ENCODE measurements at regions of chr5 and their contacts with region 1.

Region 1: DNA sequence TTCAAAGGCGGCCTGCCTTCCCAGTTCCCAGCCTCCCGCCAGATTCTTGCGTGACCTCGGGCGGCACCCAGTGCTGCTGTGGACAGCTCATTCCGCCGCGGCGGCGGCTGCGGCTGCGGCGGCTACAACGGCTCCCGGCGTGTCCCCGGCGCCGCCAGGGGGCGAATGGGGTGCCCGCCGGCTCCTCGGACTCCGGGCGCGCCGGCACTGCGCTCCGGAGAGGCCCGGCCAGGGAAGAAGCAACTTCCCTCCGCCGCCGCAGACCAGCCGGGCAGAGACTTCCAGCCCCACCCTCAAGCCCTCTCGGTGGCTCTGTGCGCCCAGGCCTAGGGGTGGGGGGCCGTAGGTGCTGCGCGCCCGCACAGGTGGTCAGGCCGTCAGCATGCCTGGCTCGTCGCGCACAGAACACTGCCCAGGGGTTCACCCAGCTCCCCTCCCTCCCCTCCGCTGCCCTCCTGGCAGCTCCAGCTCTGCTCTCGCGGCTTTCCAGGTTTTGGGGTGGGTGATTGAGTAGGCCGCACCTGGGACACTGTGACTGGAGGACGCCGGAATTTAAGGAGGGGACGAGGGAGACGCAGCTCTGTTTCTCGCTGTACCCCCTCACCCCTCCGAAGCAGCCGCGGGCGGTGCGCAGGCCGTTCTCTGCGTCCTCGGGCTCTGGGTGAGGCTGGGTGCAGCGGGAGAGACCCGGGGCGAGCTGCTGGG is 20.2 kb downstream of the IGIP start:
- DNase-seq: peak in 8 of 9 experiments; percentile 22 to 72 (median 52)
- ATAC-seq: peak; percentile 69
- H3K4me3 ChIP-seq: peak overlapping the region; percentile 32 to 36
- H3K4me3 Mint-ChIP-seq: peak overlapping the region; percentile 66
- H3K27ac ChIP-seq: no peak overlapping the region
- H3K27ac Mint-ChIP-seq: no peak overlapping the region
- H3K4me1 ChIP-seq: peaks cover 22% of the 10 kb centered on the region
- H3K4me1 Mint-ChIP-seq: peaks cover 18% of the 10 kb centered on the region
- H3K27me3 ChIP-seq: peaks cover 7 to 8% of the 10 kb centered on the region in 2 experiments
- H3K27me3 Mint-ChIP-seq: peaks cover 18% of the 10 kb centered on the region
- CTCF ChIP-seq: peak; percentile 64

Region 2: DNA sequence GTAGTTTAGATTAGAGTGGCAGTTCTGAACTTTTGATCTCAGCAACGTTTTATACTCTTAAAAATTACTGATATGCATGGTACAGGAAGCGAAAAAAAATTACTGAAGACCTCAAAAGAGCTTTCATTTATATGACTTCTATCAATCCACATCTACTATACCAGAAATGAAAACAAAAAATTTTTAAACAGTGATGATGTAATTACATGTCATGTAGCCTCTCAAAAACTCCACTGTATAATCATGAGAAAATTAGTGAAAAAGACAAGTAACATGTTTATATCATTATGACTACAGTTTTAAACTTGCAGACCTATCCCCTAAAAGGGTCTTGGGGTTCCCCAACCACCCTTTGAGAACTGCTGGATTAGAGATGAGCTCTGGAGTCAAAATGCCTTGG is 716.0 kb before region 1 on chr5:
- CTCF ChIA-PET with region 1: no interaction called
- POLR2A ChIA-PET with region 1: no interaction called
- intact Hi-C with region 1: no loop called
- DNase-seq: peak in 1 of 9 experiments; percentile 31
- ATAC-seq: peak; percentile 92
- H3K4me3 ChIP-seq: no peak overlapping the region
- H3K4me3 Mint-ChIP-seq: no peak overlapping the region
- H3K27ac ChIP-seq: no peak overlapping the region
- H3K27ac Mint-ChIP-seq: peak overlapping the region; percentile 78
- H3K4me1 ChIP-seq: peaks cover 13% of the 10 kb centered on the region
- H3K4me1 Mint-ChIP-seq: peaks cover 11% of the 10 kb centered on the region
- H3K27me3 ChIP-seq: no peaks in the 10 kb centered on the region
- H3K27me3 Mint-ChIP-seq: no peaks in the 10 kb centered on the region
- CTCF ChIP-seq: no peak

Region 3: DNA sequence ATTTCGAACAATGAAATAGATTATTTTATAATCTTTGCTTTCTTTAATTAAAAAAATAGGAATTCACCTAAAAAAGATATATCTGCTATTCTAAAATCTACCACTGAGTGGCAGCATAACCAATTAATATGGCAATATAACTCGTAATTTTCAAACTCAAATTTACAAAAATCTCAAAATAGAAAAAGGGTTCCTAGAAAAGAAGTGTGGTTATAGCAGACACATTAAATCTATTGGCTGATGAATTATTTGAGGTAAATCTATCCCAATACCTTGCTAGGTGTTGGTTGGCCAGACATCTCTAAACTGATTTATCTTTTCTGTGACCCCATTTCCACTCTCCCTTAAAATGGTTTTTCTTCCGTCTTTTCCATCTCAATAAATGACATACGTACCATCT is 72.7 kb before region 1 on chr5:
- CTCF ChIA-PET with region 1: interaction called, 179 read pairs
- POLR2A ChIA-PET with region 1: no interaction called
- intact Hi-C with region 1: loop called (anchors 1 kb)
- DNase-seq: peak in 2 of 9 experiments; percentile 56 to 62
- ATAC-seq: no peak
- H3K4me3 ChIP-seq: no peak overlapping the region
- H3K4me3 Mint-ChIP-seq: no peak overlapping the region
- H3K27ac ChIP-seq: no peak overlapping the region
- H3K27ac Mint-ChIP-seq: no peak overlapping the region
- H3K4me1 ChIP-seq: no peaks in the 10 kb centered on the region
- H3K4me1 Mint-ChIP-seq: no peaks in the 10 kb centered on the region
- H3K27me3 ChIP-seq: peaks cover 0 to 12% of the 10 kb centered on the region in 2 experiments
- H3K27me3 Mint-ChIP-seq: peaks cover 28% of the 10 kb centered on the region
- CTCF ChIP-seq: peak; percentile 94

Region 4: GRCh38 chr5:140094889-140095288 is 51.1 kb before region 1 on chr5:
- CTCF ChIA-PET with region 1: interaction called, 13 read pairs
- POLR2A ChIA-PET with region 1: no interaction called
- intact Hi-C with region 1: no loop called
- DNase-seq: no peak
- ATAC-seq: no peak
- H3K4me3 ChIP-seq: no peak overlapping the region
- H3K4me3 Mint-ChIP-seq: no peak overlapping the region
- H3K27ac ChIP-seq: no peak overlapping the region
- H3K27ac Mint-ChIP-seq: no peak overlapping the region
- H3K4me1 ChIP-seq: no peaks in the 10 kb centered on the region
- H3K4me1 Mint-ChIP-seq: no peaks in the 10 kb centered on the region
- H3K27me3 ChIP-seq: peaks cover 0 to 3% of the 10 kb centered on the region in 2 experiments
- H3K27me3 Mint-ChIP-seq: peaks cover 10% of the 10 kb centered on the region
- CTCF ChIP-seq: no peak

Region 5: DNA sequence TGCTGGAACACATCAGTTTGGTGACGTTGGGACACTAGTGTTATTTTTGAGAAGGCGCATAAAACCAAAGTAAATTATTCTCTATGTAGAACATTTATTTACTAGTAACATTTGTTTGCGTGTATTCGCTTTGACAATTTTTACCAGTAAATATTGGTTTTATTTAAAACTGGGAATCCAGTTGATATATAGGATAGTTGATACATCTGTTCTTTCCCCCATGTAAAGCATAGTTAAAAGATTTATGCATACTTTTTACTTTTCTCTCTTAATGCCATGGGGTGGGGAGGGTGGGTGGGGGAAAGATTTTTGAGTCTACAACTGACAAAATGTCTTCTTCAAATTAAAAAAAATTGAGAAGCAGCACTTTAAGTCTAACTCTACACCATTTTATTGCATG is 20.3 kb before region 1 on chr5 and contains the start of gene IGIP:
- CTCF ChIA-PET with region 1: interaction called, 44 read pairs
- POLR2A ChIA-PET with region 1: interaction called, 5 read pairs
- intact Hi-C with region 1: loop called in 1 of 2 experiments (anchors 2 kb)
- DNase-seq: no peak
- ATAC-seq: no peak
- H3K4me3 ChIP-seq: no peak within 1 kb of the TSS
- H3K4me3 Mint-ChIP-seq: no peak within 1 kb of the TSS
- H3K27ac ChIP-seq: no peak within 1 kb of the TSS
- H3K27ac Mint-ChIP-seq: no peak within 1 kb of the TSS
- H3K4me1 ChIP-seq: peaks cover 9% of the 10 kb centered on the region
- H3K4me1 Mint-ChIP-seq: peaks cover 39% of the 10 kb centered on the region
- H3K27me3 ChIP-seq: no peaks in the 10 kb centered on the region
- H3K27me3 Mint-ChIP-seq: no peaks in the 10 kb centered on the region
- CTCF ChIP-seq: no peak
- total RNA-seq, gene IGIP: 0.78 to 0.81 TPM

Region 6: GRCh38 chr5:140157032-140157803 is 11.2 kb after region 1 on chr5:
- CTCF ChIA-PET with region 1: interaction called, 152 read pairs
- POLR2A ChIA-PET with region 1: no interaction called
- intact Hi-C with region 1: loop called (anchors 1 kb)
- DNase-seq: peak; percentile 74 to 91 (median 87)
- ATAC-seq: peak; percentile 100
- H3K4me3 ChIP-seq: no peak overlapping the region
- H3K4me3 Mint-ChIP-seq: peak overlapping the region; percentile 46
- H3K27ac ChIP-seq: no peak overlapping the region
- H3K27ac Mint-ChIP-seq: no peak overlapping the region
- H3K4me1 ChIP-seq: peaks cover 4% of the 10 kb centered on the region
- H3K4me1 Mint-ChIP-seq: peaks cover 6% of the 10 kb centered on the region
- H3K27me3 ChIP-seq: no peaks in the 10 kb centered on the region
- H3K27me3 Mint-ChIP-seq: peaks cover under 1% of the 10 kb centered on the region
- CTCF ChIP-seq: peak; percentile 81